Endothelial cell of umbilical vein (primary cell): ENCODE measurements at regions of chr10 and their contacts with region 1.

Region 1: GRCh38 chr10:32413513-32413912 is 32.4 kb upstream of the CCDC7 start:
- DNase-seq: peak; percentile 49
- H3K4me3 ChIP-seq: no peak overlapping the region
- H3K27ac ChIP-seq: peak overlapping the region; percentile 24
- H3K4me1 ChIP-seq: peaks cover 24% of the 10 kb centered on the region
- H3K27me3 ChIP-seq: peaks cover 0 to 2% of the 10 kb centered on the region in 2 experiments
- CTCF ChIP-seq: no peak
- POLR2A ChIP-seq: no peak

Region 2: GRCh38 chr10:32378363-32379317 is 34.9 kb before region 1 on chr10:
- CTCF ChIA-PET with region 1: no interaction called
- POLR2A ChIA-PET with region 1: no interaction called
- dilution Hi-C with region 1: no loop called
- intact Hi-C with region 1: loop called (anchors 5 kb)
- DNase-seq: peak; percentile 89
- H3K4me3 ChIP-seq: peak overlapping the region; percentile 87 to 99 (median 93)
- H3K27ac ChIP-seq: peak overlapping the region; percentile 85
- H3K4me1 ChIP-seq: peaks cover 13% of the 10 kb centered on the region
- H3K27me3 ChIP-seq: no peaks in the 10 kb centered on the region
- CTCF ChIP-seq: no peak
- POLR2A ChIP-seq: peak; percentile 60